HepG2 (cell line): ENCODE measurements at regions of chr4 and their contacts with region 1.

Region 1: DNA sequence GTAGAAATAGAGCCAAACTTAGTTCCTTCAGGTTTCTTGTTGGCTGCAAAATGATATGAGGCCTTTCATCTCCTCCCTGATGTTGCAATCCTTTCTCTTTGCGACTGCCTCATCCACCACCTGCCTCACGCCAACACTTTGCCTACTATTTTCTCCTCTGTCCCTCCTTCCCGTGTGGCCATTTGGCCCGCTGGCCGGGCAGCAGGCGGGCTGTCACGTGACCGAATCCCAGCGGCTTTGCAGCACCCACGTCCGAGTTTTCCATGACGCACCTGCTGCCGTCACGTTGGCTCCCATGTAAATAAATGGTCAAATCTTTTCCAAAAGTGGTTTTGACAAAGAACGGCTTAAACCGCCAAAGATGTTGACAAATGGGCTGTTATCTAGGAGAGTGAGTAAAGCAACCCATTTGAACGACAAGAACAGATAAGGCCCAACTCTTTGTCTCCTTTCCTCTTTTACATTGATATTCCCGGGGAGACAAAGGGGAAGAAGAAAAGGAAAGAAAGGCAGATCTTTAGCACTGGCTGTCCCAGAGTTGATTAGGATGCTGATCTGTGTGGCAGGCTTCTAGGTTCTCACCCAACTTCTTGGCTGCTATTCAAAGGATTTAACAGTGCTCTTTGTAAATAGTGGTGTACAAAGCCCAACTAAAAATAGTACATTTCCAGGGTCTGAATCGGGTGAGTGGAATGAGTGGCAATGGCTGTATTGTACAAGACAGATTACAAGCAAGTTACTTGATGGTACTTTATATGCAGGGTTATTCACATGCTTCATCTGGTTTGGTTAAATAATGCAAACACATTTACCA is 174.2 kb upstream of the JADE1 start:
- DNase-seq: peak; percentile 15
- ATAC-seq: peak; percentile 49; the same call in 2 of the 3 replicates
- H3K4me3 ChIP-seq: peak overlapping the region in 2 of 3 experiments; percentile 13 to 19; a peak in 3 of 6 replicates
- H3K27ac ChIP-seq: no peak overlapping the region
- H3K4me1 ChIP-seq: peaks cover 12% of the 10 kb centered on the region
- H3K27me3 ChIP-seq: peaks cover 0 to 2% of the 10 kb centered on the region in 2 experiments; a peak in 1 of 5 replicates
- CTCF ChIP-seq: no peak
- EP300 ChIP-seq: no peak
- POLR2A ChIP-seq: no peak
- RAD21 ChIP-seq: no peak

Region 2: GRCh38 chr4:128574706-128575105 is 60.6 kb before region 1 on chr4:
- CTCF ChIA-PET with region 1: no interaction called
- POLR2A ChIA-PET with region 1: no interaction called
- in situ Hi-C with region 1: no loop called
- intact Hi-C with region 1: loop called (anchors 5 kb)
- DNase-seq: peak; percentile 32
- ATAC-seq: peak; percentile 86
- H3K4me3 ChIP-seq: no peak overlapping the region
- H3K27ac ChIP-seq: no peak overlapping the region
- H3K4me1 ChIP-seq: peaks cover 21% of the 10 kb centered on the region
- H3K27me3 ChIP-seq: no peaks in the 10 kb centered on the region; a peak in 1 of 5 replicates
- CTCF ChIP-seq: peak; percentile 65
- EP300 ChIP-seq: no peak
- POLR2A ChIP-seq: no peak
- RAD21 ChIP-seq: peak; percentile 32; the same call in 1 of the 2 replicates

Region 3: DNA sequence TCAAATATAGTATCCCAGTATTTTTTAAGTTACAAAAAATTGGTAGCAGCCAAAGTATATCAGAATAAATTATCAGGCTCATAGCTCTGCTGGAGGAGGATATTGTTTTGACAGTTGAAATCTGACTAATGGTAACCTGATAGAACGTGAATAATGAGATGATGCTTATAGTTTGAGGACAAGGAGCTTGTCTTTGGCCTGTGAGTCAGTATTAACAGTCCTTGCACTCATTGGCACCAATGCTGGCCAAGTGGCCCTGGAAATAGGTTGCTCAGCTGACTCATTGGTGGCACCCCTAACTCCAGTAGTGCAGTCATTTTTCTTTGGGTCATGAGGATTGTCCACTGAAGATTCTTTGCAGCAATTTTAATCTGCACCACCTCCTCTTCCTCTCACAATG is 29.2 kb before region 1 on chr4:
- CTCF ChIA-PET with region 1: no interaction called
- POLR2A ChIA-PET with region 1: no interaction called
- in situ Hi-C with region 1: no loop called
- intact Hi-C with region 1: no loop called
- DNase-seq: no peak
- ATAC-seq: no peak
- H3K4me3 ChIP-seq: no peak overlapping the region
- H3K27ac ChIP-seq: no peak overlapping the region
- H3K4me1 ChIP-seq: peaks cover 11% of the 10 kb centered on the region
- H3K27me3 ChIP-seq: no peaks in the 10 kb centered on the region
- CTCF ChIP-seq: no peak
- EP300 ChIP-seq: no peak
- POLR2A ChIP-seq: no peak
- RAD21 ChIP-seq: no peak